ENCODE measurements at regions of chr11 and their contacts with region 1.

Region 1: DNA sequence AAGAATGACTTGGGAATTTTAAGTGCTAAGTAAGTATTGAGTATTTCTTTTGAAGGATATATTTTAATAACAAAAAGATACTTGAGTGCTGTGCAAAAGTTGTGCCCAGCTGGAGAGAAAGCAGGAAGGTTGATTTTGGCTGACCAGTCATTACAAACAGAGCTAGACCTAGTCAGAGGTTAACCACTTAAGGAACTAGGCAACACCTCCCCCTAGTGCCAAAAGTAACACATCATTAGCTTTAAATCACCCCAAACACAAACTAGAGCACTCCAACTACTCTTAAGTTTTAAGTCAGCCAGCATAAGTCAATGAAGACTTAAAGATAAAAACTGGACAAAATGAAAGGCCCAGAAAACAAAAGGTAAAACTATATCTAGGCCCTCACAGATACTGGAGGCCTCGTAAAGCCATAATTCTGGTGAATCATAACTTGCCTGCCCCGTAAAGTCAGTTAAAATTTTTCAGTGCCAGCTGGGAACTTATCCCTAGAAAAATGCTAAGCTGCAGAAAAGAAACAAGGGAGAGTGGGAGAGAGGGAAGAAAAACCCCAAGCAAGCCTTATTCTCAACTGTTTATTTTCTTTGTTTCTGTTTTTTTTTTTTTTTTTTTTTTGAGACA is 4.6 kb downstream of the TMEM9B start:
- DNase-seq: peak; percentile 83

Region 2: DNA sequence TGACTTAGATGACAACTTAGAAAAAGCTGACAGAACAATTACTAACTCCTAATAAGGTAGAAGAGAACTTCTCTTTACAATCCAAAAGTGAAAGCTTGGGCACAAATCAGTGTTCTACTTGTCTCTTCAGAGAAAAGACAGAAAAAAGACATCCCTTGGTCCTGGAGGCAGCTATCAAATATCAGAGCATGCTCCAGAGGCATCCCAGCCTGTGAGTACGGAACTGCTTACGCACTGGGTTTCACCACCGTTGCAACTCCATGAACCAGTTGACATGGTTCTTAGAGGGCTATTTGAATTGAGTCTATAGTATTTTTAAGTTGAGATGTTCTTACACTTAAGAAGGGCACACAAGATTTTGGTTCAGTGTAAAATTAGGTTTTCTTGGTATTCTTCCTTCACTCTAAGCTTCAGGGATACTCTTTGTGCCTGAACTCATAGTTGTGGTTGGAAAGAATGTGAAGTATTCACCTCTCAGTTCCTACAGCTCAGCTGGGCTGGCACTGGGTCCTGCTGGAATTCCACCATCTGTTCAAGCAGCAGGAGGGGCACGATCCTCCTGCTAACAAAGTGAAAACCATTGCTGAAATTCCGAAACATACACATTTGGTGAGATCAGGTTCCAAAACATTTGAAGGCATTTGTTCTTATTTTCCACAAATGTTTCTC is 42.4 kb before region 1 on chr11:
- in situ Hi-C with region 1: loop called (anchors 5 kb)
- DNase-seq: peak; percentile 91